K562 (cell line): ENCODE measurements at regions of chr1 and their contacts with region 1.

Region 1: DNA sequence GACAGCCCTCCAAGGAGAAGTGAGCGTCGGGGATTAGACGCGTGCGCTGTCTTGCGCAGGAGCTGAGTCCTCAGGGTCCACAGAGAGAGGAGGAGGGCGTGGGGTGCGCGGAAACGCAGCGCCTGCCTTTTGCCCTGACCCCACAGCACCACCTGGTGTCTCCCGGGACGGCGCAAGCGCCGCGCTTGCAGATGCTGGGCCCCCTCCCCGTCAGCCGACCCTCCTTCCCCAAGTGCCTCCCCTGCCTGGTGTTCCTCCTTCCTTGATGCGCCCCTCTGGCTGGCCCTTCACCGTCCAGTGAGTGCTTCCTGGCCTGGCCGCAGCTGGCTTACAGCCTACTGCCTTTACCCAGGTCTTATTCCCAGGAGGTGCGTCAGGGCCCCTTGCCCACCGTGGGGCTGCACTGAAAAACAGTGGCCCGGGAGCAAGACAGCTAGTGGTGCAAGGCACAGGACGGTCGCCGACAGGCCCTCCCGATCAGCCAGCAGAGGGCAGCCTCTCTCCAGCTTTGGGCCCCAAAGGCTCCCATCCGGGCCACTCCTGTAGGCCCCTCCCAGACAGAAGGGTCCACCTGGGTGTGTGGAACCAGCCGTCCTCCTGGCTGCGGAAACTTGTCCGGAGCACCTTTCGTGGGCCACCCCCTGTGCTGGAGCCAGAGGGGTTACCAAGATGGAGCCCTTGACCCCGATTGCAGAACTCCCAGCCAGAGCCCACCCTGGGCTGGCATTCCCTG is 12.9 kb upstream of the PHLDA3 start:
- DNase-seq: peak; percentile 92 to 93 (median 92)
- ATAC-seq: peak; percentile 91
- H3K4me3 ChIP-seq: no peak overlapping the region
- H3K27ac ChIP-seq: no peak overlapping the region
- H3K4me1 ChIP-seq: peaks cover 20 to 25% of the 10 kb centered on the region in 2 experiments
- H3K27me3 ChIP-seq: peaks cover 0 to 4% of the 10 kb centered on the region in 2 experiments; a peak in 1 of 5 replicates
- CTCF ChIP-seq: peak; percentile 98
- EP300 ChIP-seq: no peak
- POLR2A ChIP-seq: no peak
- RAD21 ChIP-seq: peak; percentile 96 to 97

Region 2: GRCh38 chr1:201408176-201408833 is 73.6 kb before region 1 on chr1:
- CTCF ChIA-PET with region 1: no interaction called
- POLR2A ChIA-PET with region 1: no interaction called
- in situ Hi-C with region 1: no loop called
- intact Hi-C with region 1: no loop called
- DNase-seq: peak; percentile 86 to 92 (median 88)
- ATAC-seq: peak; percentile 97
- H3K4me3 ChIP-seq: no peak overlapping the region
- H3K27ac ChIP-seq: no peak overlapping the region
- H3K4me1 ChIP-seq: no peaks in the 10 kb centered on the region
- H3K27me3 ChIP-seq: peaks cover 33 to 69% of the 10 kb centered on the region in 2 experiments
- CTCF ChIP-seq: peak; percentile 88 to 98 (median 97)
- EP300 ChIP-seq: no peak
- POLR2A ChIP-seq: no peak
- RAD21 ChIP-seq: peak in 1 of 2 experiments; percentile 76; a peak in 2 of 4 replicates

Region 3: GRCh38 chr1:201436393-201436792 is 45.5 kb before region 1 on chr1:
- CTCF ChIA-PET with region 1: interaction called, 11 read pairs
- POLR2A ChIA-PET with region 1: interaction called, 8 read pairs
- in situ Hi-C with region 1: no loop called
- intact Hi-C with region 1: loop called (anchors 1 kb)
- DNase-seq: peak in 3 of 4 experiments; percentile 49 to 60 (median 56)
- ATAC-seq: peak; percentile 92
- H3K4me3 ChIP-seq: no peak overlapping the region
- H3K27ac ChIP-seq: no peak overlapping the region
- H3K4me1 ChIP-seq: peaks cover 0 to 4% of the 10 kb centered on the region in 2 experiments; a peak in 2 of 5 replicates
- H3K27me3 ChIP-seq: peaks cover 0 to 21% of the 10 kb centered on the region in 2 experiments; a peak in 3 of 5 replicates
- CTCF ChIP-seq: peak; percentile 50 to 53 (median 50); a peak in 5 of 6 replicates
- EP300 ChIP-seq: no peak
- POLR2A ChIP-seq: no peak
- RAD21 ChIP-seq: peak in 1 of 2 experiments; percentile 38; a peak in 2 of 4 replicates

Region 4: GRCh38 chr1:201447911-201448871 is 33.7 kb before region 1 on chr1:
- CTCF ChIA-PET with region 1: interaction called, 90 read pairs
- POLR2A ChIA-PET with region 1: interaction called, 4 read pairs
- in situ Hi-C with region 1: no loop called
- intact Hi-C with region 1: loop called (anchors 1 kb)
- DNase-seq: peak; percentile 86 to 94 (median 92)
- ATAC-seq: peak; percentile 100
- H3K4me3 ChIP-seq: no peak overlapping the region
- H3K27ac ChIP-seq: no peak overlapping the region
- H3K4me1 ChIP-seq: peaks cover 0 to 11% of the 10 kb centered on the region in 2 experiments; a peak in 3 of 5 replicates
- H3K27me3 ChIP-seq: peaks cover 8 to 20% of the 10 kb centered on the region in 2 experiments
- CTCF ChIP-seq: peak; percentile 93 to 95 (median 94)
- EP300 ChIP-seq: no peak
- POLR2A ChIP-seq: no peak
- RAD21 ChIP-seq: peak; percentile 89 to 97

Region 5: GRCh38 chr1:201495471-201496295 is 13.8 kb after region 1 on chr1:
- CTCF ChIA-PET with region 1: no interaction called
- POLR2A ChIA-PET with region 1: interaction called, 12 read pairs
- in situ Hi-C with region 1: no loop called
- intact Hi-C with region 1: no loop called
- DNase-seq: no peak
- ATAC-seq: no peak
- H3K4me3 ChIP-seq: no peak overlapping the region
- H3K27ac ChIP-seq: no peak overlapping the region
- H3K4me1 ChIP-seq: no peaks in the 10 kb centered on the region; a peak in 1 of 5 replicates
- H3K27me3 ChIP-seq: peaks cover 0 to 15% of the 10 kb centered on the region in 2 experiments; a peak in 1 of 5 replicates
- CTCF ChIP-seq: no peak
- EP300 ChIP-seq: no peak
- POLR2A ChIP-seq: no peak
- RAD21 ChIP-seq: no peak

Region 6: GRCh38 chr1:201511941-201512539 is 30.1 kb after region 1 on chr1:
- CTCF ChIA-PET with region 1: interaction called, 166 read pairs
- POLR2A ChIA-PET with region 1: interaction called, 8 read pairs
- in situ Hi-C with region 1: no loop called
- intact Hi-C with region 1: loop called (anchors 1 kb)
- DNase-seq: peak in 1 of 4 experiments; percentile 37
- ATAC-seq: peak; percentile 16
- H3K4me3 ChIP-seq: no peak overlapping the region
- H3K27ac ChIP-seq: no peak overlapping the region
- H3K4me1 ChIP-seq: peaks cover 22 to 46% of the 10 kb centered on the region in 2 experiments
- H3K27me3 ChIP-seq: no peaks in the 10 kb centered on the region
- CTCF ChIP-seq: no peak
- EP300 ChIP-seq: no peak
- POLR2A ChIP-seq: no peak
- RAD21 ChIP-seq: no peak

Region 7: DNA sequence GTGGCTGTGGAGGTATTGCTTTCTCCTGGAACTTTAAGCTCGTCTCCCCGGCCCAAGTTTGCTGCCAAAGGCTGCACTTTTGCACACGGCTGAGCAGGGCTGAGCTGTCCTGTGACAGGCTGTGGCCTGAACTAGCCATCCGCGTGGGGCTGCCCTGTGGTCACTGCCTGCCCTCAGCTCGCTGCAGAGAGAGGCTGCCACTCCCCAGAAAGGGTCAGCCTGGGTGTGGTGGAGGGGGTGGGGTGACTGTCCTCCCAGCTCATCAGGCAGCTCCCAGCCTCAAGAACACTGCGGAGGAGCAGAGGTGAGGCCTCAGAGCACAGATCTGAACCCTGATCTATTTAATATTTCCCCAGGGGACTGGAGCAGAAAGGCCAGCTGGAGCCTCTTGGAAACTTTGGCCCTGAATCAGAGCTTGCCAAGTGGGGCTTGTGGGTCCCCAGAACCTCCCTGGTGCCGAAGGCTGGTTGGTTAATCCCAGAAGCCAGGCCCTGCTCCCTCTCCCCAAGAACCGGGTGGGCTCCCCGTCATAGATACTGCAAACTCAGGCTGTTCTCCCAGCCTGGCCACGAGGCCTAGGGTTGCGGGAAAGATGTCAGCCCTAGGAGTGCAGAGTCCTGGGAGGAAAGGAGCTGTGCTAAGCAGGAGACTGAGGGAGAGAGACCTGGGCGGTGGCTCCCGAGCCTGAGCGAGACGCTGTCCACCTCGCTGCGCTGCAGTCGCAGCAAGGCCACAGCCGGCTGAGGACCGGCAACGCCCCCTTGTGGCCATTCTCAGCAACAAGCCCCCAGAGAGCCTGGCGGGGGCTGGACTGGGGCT is 221.9 kb after region 1 on chr1:
- CTCF ChIA-PET with region 1: interaction called, 9 read pairs
- POLR2A ChIA-PET with region 1: no interaction called
- in situ Hi-C with region 1: no loop called
- intact Hi-C with region 1: loop called (anchors 1 kb)
- DNase-seq: peak; percentile 90 to 96 (median 94)
- ATAC-seq: peak; percentile 98
- H3K4me3 ChIP-seq: no peak overlapping the region
- H3K27ac ChIP-seq: no peak overlapping the region
- H3K4me1 ChIP-seq: peaks cover 11 to 15% of the 10 kb centered on the region in 2 experiments
- H3K27me3 ChIP-seq: peaks cover 0 to 4% of the 10 kb centered on the region in 2 experiments; a peak in 1 of 5 replicates
- CTCF ChIP-seq: peak; percentile 98 to 99 (median 99)
- EP300 ChIP-seq: peak; percentile 21; the same call in 1 of the 2 replicates
- POLR2A ChIP-seq: no peak
- RAD21 ChIP-seq: peak; percentile 100

Region 8: GRCh38 chr1:201792534-201793305 is 310.8 kb after region 1 on chr1:
- CTCF ChIA-PET with region 1: interaction called, 9 read pairs
- POLR2A ChIA-PET with region 1: no interaction called
- in situ Hi-C with region 1: no loop called
- intact Hi-C with region 1: loop called (anchors 5 kb)
- DNase-seq: peak; percentile 80 to 86 (median 84)
- ATAC-seq: peak; percentile 98
- H3K4me3 ChIP-seq: no peak overlapping the region
- H3K27ac ChIP-seq: no peak overlapping the region
- H3K4me1 ChIP-seq: no peaks in the 10 kb centered on the region
- H3K27me3 ChIP-seq: no peaks in the 10 kb centered on the region; a peak in 1 of 5 replicates
- CTCF ChIP-seq: peak; percentile 95 to 99 (median 98)
- EP300 ChIP-seq: no peak
- POLR2A ChIP-seq: no peak
- RAD21 ChIP-seq: peak; percentile 97 to 99